Dendritic cell treated with granulocyte-macrophage colony-stimulating factor and Interleukin-4, amounts not matched to agents 40 ng/mL and 50 ng/mL, for 4 days (primary cell): ENCODE measurements at regions of chr17 and their contacts with region 1.

Region 1: GRCh38 chr17:67902511-67903231 is 77.4 kb downstream of the BPTF start:
- H3K4me3 Mint-ChIP-seq: no peak overlapping the region
- H3K27ac Mint-ChIP-seq: no peak overlapping the region
- H3K4me1 Mint-ChIP-seq: no peaks in the 10 kb centered on the region
- H3K27me3 Mint-ChIP-seq: no peaks in the 10 kb centered on the region

Region 2: GRCh38 chr17:67733371-67733940 is 169.2 kb before region 1 on chr17:
- intact Hi-C with region 1: loop called (anchors 10 kb)
- H3K4me3 Mint-ChIP-seq: no peak overlapping the region
- H3K27ac Mint-ChIP-seq: no peak overlapping the region
- H3K4me1 Mint-ChIP-seq: peaks cover 2% of the 10 kb centered on the region
- H3K27me3 Mint-ChIP-seq: no peaks in the 10 kb centered on the region

Region 3: GRCh38 chr17:67995570-67996263 is 93.0 kb after region 1 on chr17:
- intact Hi-C with region 1: no loop called
- H3K4me3 Mint-ChIP-seq: peak overlapping the region; percentile 84
- H3K27ac Mint-ChIP-seq: peak overlapping the region; percentile 89
- H3K4me1 Mint-ChIP-seq: peaks cover 42% of the 10 kb centered on the region
- H3K27me3 Mint-ChIP-seq: peaks cover 39% of the 10 kb centered on the region